ENCODE measurements at regions of chr3 and their contacts with region 1.

Region 1: DNA sequence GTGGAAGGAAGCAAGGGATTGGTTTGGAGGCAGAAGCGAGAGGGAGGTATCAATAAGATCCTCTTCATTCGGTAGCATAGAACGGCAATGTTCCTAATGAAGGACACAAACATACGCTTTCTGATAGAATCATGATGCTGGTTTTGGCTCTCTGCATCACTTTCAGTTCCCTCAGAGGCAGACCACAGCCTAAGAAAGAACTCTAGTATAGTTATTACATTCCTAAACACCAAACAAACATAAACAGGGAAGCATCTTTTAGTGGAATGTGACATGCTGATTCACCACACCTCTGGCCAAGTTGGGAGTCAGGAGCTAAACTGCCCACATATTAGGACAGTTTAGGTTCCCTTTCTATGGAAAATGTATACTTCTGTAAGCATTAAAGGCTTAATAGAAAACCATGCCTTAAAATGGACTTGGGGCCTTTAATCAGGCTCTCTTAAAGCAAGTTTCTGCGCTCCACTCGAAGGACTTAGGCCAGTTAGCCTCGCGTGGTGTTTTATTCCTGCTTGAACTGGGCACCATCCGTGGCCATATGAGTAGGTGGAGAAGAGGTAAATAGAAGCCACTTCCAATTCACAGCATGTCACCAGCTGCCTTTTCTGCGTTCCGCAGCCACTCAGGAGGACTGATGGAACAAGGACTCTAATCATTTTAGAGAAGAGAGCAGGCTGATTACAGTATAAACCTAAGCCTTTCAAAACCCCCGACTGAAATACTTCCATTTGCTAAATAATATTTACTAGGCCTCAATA is 53.7 kb downstream of the CD47 start:
- DNase-seq: no peak
- H3K4me3 ChIP-seq: no peak overlapping the region
- H3K27ac ChIP-seq: no peak overlapping the region
- H3K4me1 ChIP-seq: peaks cover 21% of the 10 kb centered on the region
- H3K27me3 ChIP-seq: no peaks in the 10 kb centered on the region
- CTCF ChIP-seq: no peak
- POLR2A ChIP-seq: no peak

Region 2: GRCh38 chr3:107992981-107993684 is 44.0 kb before region 1 on chr3:
- CTCF ChIA-PET with region 1: no interaction called
- POLR2A ChIA-PET with region 1: no interaction called
- dilution Hi-C with region 1: no loop called
- intact Hi-C with region 1: no loop called
- DNase-seq: no peak
- H3K4me3 ChIP-seq: no peak overlapping the region
- H3K27ac ChIP-seq: no peak overlapping the region
- H3K4me1 ChIP-seq: peaks cover 9% of the 10 kb centered on the region
- H3K27me3 ChIP-seq: no peaks in the 10 kb centered on the region
- CTCF ChIP-seq: no peak
- POLR2A ChIP-seq: no peak

Region 3: DNA sequence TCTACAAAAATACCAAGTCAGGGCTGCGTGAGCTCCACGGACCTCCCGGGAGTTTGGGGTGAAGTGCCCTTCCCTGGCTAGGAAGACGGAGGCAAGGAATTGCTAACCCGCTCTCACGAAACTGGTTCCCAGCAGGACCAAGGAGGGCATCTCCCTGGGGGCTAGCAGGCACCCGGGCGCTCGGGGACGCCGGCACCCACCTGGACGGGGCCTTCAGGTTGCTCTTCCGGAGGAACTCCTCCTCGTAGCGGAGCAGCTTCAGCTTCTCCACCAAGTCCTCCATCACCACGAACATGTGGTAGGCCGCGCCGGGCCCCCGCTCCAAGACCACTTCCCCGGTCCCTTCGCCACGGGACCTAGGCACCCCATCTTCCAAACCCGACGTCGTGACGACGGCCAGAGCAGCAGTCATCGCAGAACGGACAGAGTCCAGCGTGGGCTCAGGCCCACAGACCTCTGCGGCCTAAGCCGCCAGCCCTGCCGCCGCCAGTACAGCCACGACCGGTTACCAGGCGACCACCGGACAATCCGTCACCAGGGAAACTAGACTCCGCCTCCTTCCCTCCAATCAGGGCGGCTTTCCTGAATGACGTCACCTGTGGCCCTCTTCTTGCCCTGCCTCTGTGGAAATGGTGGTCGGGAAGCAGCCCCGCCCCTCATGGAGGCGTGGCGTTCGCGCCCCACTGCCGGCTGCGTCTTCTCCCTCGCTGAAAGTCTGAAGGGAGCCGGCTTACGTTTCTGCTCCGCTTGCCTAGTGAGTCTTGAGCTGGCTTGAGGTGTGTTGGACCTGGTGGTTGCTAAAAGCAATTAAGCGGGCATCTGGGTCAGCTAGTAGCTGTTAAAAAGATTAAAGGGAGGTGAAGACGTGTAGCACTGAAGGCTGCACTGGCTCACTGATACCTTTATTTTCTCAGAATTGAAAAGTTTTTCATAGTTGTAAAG is 185.0 kb after region 1 on chr3 and contains the start of gene IFT57:
- CTCF ChIA-PET with region 1: no interaction called
- POLR2A ChIA-PET with region 1: no interaction called
- dilution Hi-C with region 1: no loop called
- intact Hi-C with region 1: loop called (anchors 5 kb)
- DNase-seq: peak; percentile 99
- H3K4me3 ChIP-seq: peak within 1 kb of the TSS; percentile 66 to 87 (median 82)
- H3K27ac ChIP-seq: peak within 1 kb of the TSS; percentile 68
- H3K4me1 ChIP-seq: peaks cover 21% of the 10 kb centered on the region
- H3K27me3 ChIP-seq: no peaks in the 10 kb centered on the region
- CTCF ChIP-seq: no peak
- POLR2A ChIP-seq: peak; percentile 36
- total RNA-seq, gene IFT57: 23.4 and 25.1 TPM in 2 replicates

Region 4: DNA sequence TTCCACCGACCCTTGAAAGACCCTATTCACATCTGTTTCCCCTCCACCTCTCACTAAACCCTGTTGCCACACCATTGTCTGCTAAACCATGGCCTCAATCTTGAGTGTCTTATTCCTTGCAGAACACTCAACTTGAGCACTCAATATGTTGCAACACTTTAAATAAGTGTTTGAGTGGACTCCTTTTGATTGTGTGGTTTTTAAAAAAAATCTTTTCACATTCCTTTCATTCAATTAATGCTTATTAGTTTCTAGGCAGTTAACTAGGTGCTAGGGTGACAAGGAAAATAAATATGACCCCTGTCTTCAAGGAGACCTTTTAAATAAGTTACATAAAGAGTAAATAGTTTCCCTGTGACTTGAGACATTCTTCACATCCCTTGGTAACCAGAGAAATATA is 245.8 kb after region 1 on chr3:
- CTCF ChIA-PET with region 1: no interaction called
- POLR2A ChIA-PET with region 1: no interaction called
- dilution Hi-C with region 1: no loop called
- intact Hi-C with region 1: no loop called
- DNase-seq: no peak
- H3K4me3 ChIP-seq: no peak overlapping the region
- H3K27ac ChIP-seq: no peak overlapping the region
- H3K4me1 ChIP-seq: no peaks in the 10 kb centered on the region
- H3K27me3 ChIP-seq: peaks cover 2 to 3% of the 10 kb centered on the region in 2 experiments
- CTCF ChIP-seq: no peak
- POLR2A ChIP-seq: no peak